Activated CD8-positive, alpha-beta T cell treated with anti-CD3 and anti-CD28 coated beads for 36 hours (primary cell): ENCODE measurements at regions of chr6 and their contacts with region 1.

Region 1: DNA sequence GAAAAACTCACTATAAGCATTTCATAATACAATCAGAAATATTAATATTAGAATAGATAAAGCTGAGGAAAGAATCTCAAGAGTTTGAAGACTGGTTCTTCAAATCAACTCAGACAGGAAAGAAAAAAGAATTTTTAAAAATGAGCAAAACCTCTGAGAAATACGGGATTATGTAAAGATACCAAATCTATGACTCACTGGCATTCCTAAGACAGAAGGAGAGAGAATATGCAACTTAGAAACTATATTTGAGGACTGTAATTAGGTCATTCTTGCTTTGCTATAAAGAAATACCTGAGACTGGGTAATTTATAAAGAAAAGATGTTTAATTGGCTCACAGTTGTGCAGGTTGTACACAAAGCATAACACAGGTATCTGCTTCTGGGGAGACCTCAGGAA is 665.1 kb downstream of the RNF144B start:
- DNase-seq: no peak
- ATAC-seq: no peak
- H3K4me3 Mint-ChIP-seq: no peak overlapping the region
- H3K27ac Mint-ChIP-seq: no peak overlapping the region
- H3K4me1 Mint-ChIP-seq: no peaks in the 10 kb centered on the region
- H3K27me3 Mint-ChIP-seq: no peaks in the 10 kb centered on the region
- CTCF ChIP-seq: no peak

Region 2: GRCh38 chr6:19035461-19036195 is 16.6 kb before region 1 on chr6:
- CTCF ChIA-PET with region 1: no interaction called
- POLR2A ChIA-PET with region 1: no interaction called
- intact Hi-C with region 1: loop called (anchors 1 kb)
- DNase-seq: no peak
- ATAC-seq: no peak
- H3K4me3 Mint-ChIP-seq: no peak overlapping the region
- H3K27ac Mint-ChIP-seq: no peak overlapping the region
- H3K4me1 Mint-ChIP-seq: no peaks in the 10 kb centered on the region
- H3K27me3 Mint-ChIP-seq: no peaks in the 10 kb centered on the region
- CTCF ChIP-seq: no peak